Panc1 (cell line): ENCODE measurements at regions of chr19 and their contacts with region 1.

Region 1: GRCh38 chr19:47143322-47144073 is 12.9 kb downstream of the SAE1 start:
- DNase-seq: no peak
- ATAC-seq: no peak
- H3K4me3 ChIP-seq: no peak overlapping the region
- H3K27ac ChIP-seq: no peak overlapping the region
- H3K4me1 ChIP-seq: peaks cover 6% of the 10 kb centered on the region
- H3K27me3 ChIP-seq: no peaks in the 10 kb centered on the region
- CTCF ChIP-seq: no peak

Region 2: DNA sequence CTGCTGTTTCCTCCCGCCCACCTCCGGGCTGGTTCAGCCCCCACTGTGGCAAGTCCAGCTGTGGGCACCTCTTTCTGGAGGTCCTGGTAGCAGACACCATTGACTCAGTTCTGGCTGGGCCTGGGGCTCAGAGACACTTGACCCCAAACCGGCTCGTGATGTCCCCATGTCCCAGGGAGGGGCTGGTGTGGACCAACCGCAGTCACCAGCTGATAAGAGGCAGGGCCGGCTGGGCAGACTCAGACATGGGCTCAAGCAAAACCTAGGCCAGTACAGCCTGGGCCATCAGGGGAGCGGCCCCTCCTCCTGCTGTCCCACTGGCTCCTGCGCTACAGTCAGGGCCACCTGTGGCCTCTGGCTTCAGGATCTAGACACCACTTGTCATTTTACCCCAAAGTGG is 75.3 kb before region 1 on chr19:
- CTCF ChIA-PET with region 1: no interaction called
- POLR2A ChIA-PET with region 1: interaction called, 11 read pairs
- in situ Hi-C with region 1: no loop called
- intact Hi-C with region 1: no loop called
- DNase-seq: no peak
- ATAC-seq: 0 out of 2 replicates have a peak, but pooled peaks have one; percentile 33
- H3K4me3 ChIP-seq: no peak overlapping the region
- H3K27ac ChIP-seq: no peak overlapping the region
- H3K4me1 ChIP-seq: no peaks in the 10 kb centered on the region
- H3K27me3 ChIP-seq: no peaks in the 10 kb centered on the region
- CTCF ChIP-seq: no peak

Region 3: GRCh38 chr19:47225746-47226425 is 82.4 kb after region 1 on chr19:
- CTCF ChIA-PET with region 1: no interaction called
- POLR2A ChIA-PET with region 1: interaction called, 11 read pairs
- in situ Hi-C with region 1: no loop called
- intact Hi-C with region 1: no loop called
- DNase-seq: no peak
- ATAC-seq: peak; percentile 62
- H3K4me3 ChIP-seq: peak overlapping the region; percentile 23 to 65; a peak in 3 of 4 replicates
- H3K27ac ChIP-seq: peak overlapping the region; percentile 95
- H3K4me1 ChIP-seq: peaks cover 16% of the 10 kb centered on the region
- H3K27me3 ChIP-seq: no peaks in the 10 kb centered on the region
- CTCF ChIP-seq: no peak; the same call in 1 of the 2 replicates

Region 4: DNA sequence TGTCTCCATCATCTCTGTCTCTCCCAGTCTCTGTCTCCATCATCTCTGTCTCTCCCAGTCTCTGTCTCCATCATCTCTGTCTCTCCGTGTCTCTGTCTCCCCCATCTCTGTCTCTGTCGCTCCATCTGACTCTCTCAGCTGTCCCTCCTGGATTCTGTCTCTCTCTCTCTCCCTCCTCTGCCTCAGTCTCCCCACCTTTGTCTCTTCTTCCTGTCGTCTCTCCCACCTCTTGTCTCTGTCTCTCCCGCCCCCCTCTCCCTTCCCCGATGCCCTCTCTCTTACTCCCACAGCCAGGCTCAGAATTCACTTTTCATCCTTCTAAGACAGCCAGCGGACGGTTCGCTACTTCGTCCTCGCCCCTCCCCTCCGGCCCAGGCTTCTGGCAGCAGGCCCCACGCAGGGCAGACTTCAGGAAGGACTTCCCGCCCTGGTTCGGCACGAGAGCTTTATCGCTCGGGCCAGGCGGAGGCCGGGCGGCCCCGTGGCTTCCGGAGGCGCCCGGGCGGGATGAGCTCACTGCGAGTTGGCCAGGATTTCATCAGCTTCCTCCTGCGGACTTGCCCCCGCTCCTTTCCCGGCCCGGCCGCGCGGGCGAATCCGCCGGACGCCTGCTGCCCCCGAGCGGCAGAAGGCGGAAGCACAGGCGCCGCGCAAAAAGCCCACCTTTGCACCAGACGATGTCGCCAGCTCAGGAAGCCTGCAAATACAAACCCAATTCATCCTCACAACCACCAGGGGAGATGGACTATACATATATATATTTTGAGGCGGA is 100.5 kb after region 1 on chr19:
- CTCF ChIA-PET with region 1: interaction called, 6 read pairs
- POLR2A ChIA-PET with region 1: no interaction called
- in situ Hi-C with region 1: no loop called
- intact Hi-C with region 1: loop called (anchors 5 kb)
- DNase-seq: no peak
- ATAC-seq: peak; percentile 89
- H3K4me3 ChIP-seq: peak overlapping the region; percentile 63 to 80
- H3K27ac ChIP-seq: peak overlapping the region; percentile 91
- H3K4me1 ChIP-seq: peaks cover 4% of the 10 kb centered on the region
- H3K27me3 ChIP-seq: no peaks in the 10 kb centered on the region
- CTCF ChIP-seq: peak; percentile 96

Region 5: DNA sequence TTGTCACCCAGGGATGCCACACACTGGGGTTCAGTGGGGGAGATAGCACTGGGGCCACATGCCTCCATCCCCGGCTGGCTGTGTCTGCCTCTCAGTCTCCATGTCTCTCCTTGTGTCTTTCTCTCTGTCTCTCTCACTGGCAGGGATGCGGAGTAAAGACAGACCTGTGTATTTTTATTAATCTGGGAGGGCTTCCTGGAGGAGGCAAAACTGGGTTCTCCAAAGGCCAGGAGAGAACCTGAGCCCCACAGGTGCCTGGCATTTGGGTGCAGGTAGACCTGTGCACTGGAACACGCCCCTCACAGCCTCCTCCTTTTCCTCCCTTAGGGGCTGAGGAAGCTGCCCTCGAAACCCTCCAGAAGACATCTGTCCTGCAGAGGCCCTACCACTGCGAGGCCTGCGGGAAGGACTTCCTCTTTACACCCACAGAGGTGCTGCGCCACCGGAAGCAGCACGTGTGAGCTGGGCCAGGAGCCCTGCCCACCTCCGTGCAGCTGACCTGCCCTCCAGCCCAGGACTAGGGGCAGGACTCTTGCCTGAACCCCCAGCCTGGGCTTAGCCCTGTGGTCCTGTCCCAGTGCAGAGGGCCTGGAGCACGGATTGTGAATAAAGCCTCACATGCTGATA is 238.3 kb after region 1 on chr19:
- CTCF ChIA-PET with region 1: no interaction called
- POLR2A ChIA-PET with region 1: no interaction called
- in situ Hi-C with region 1: no loop called
- intact Hi-C with region 1: no loop called
- DNase-seq: no peak
- ATAC-seq: no peak
- H3K4me3 ChIP-seq: no peak overlapping the region
- H3K27ac ChIP-seq: no peak overlapping the region
- H3K4me1 ChIP-seq: no peaks in the 10 kb centered on the region
- H3K27me3 ChIP-seq: no peaks in the 10 kb centered on the region
- CTCF ChIP-seq: no peak

Region 6: GRCh38 chr19:48874271-48875135 is 1731.0 kb after region 1 on chr19:
- CTCF ChIA-PET with region 1: no interaction called
- POLR2A ChIA-PET with region 1: no interaction called
- in situ Hi-C with region 1: no loop called
- intact Hi-C with region 1: no loop called
- DNase-seq: no peak
- ATAC-seq: peak; percentile 18; the same call in 1 of the 2 replicates
- H3K4me3 ChIP-seq: peak overlapping the region; percentile 84 to 99
- H3K27ac ChIP-seq: peak overlapping the region; percentile 93
- H3K4me1 ChIP-seq: peaks cover 10% of the 10 kb centered on the region
- H3K27me3 ChIP-seq: no peaks in the 10 kb centered on the region
- CTCF ChIP-seq: no peak